ENCODE measurements at regions of chr4 and their contacts with region 1.

Region 1: GRCh38 chr4:150593996-150594395 is 12.0 kb downstream of the MAB21L2 start:
- DNase-seq: peak; percentile 30
- H3K4me3 ChIP-seq: no peak overlapping the region
- H3K27ac ChIP-seq: no peak overlapping the region
- H3K4me1 ChIP-seq: no peaks in the 10 kb centered on the region
- H3K27me3 ChIP-seq: no peaks in the 10 kb centered on the region

Region 2: GRCh38 chr4:149980941-149981340 is 613.1 kb before region 1 on chr4:
- in situ Hi-C with region 1: loop called (anchors 25 kb)
- DNase-seq: peak; percentile 62
- H3K4me3 ChIP-seq: no peak overlapping the region
- H3K27ac ChIP-seq: no peak overlapping the region
- H3K4me1 ChIP-seq: no peaks in the 10 kb centered on the region
- H3K27me3 ChIP-seq: no peaks in the 10 kb centered on the region

Region 3: DNA sequence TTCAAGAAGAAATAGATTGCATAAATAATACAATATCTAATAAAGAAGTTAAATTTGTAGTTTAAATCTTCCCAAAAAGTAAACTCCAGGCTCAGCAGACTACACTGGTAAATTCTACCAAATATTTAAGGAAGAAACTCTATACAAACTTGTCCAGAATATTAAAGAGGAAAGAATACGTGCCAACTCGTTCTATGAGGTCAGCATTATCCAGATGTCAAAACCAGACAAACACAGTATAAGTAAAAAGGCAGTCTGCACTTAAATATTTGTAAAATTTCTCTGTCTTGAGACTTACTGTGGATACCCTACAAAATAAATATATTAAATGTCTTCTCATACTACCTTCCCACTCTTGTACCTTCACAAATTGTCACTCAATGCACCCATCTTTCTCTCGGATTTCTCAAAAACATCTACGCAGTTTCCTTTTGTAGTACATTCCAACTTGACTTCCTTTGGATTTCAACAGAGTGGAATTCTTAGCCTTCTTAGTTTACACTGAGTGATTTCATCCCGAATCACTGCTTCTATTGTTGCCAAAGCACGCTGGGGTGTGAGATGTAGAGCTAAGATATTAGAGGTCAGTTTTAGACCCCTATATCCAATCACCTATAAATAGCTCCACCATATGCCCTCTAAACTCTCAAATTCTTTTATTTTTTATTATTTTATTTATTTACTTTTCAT is 83.7 kb before region 1 on chr4:
- in situ Hi-C with region 1: no loop called
- DNase-seq: peak; percentile 88
- H3K4me3 ChIP-seq: peak overlapping the region; percentile 61
- H3K27ac ChIP-seq: peak overlapping the region; percentile 83
- H3K4me1 ChIP-seq: peaks cover 15% of the 10 kb centered on the region
- H3K27me3 ChIP-seq: no peaks in the 10 kb centered on the region

Region 4: GRCh38 chr4:150722908-150723362 is 128.9 kb after region 1 on chr4:
- in situ Hi-C with region 1: no loop called
- DNase-seq: peak; percentile 8
- H3K4me3 ChIP-seq: no peak overlapping the region
- H3K27ac ChIP-seq: no peak overlapping the region
- H3K4me1 ChIP-seq: no peaks in the 10 kb centered on the region
- H3K27me3 ChIP-seq: no peaks in the 10 kb centered on the region

Region 5: DNA sequence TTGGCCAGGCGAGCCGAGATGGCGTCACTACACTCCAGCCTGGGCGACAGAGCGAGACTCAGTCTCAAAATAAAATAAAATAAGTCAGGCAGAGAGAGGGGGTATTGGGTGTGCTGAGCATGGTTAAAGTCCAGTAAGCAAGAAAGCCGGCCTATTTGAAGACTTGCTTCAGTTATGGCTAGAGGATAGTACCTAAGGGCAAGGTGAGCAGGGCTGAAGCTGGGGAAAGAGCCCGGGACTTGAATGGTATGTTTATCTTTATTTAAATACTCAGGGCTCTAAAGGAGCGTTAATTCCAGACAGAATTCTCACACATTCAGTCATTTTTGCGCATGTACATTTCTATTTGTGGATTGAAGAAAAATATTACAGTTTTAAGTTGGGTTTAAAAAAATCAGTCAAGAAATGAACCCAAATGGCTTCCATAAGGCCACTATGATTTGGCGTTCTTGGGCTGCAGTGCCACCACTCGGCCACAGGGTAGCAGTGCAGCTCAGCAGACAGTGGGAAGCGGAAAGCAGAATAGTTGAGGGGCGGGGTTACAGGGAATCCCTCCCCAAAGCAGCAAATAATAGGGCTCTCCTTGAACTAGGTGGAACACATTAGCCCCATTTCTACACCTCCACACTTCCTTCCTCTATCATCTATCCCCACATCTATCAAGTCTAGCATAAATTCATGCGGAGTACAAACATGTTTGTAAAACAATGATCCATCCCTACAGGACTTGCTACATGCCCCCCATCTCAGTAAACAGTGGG is 768.6 kb after region 1 on chr4:
- in situ Hi-C with region 1: no loop called
- DNase-seq: peak; percentile 90
- H3K4me3 ChIP-seq: no peak overlapping the region
- H3K27ac ChIP-seq: no peak overlapping the region
- H3K4me1 ChIP-seq: no peaks in the 10 kb centered on the region
- H3K27me3 ChIP-seq: no peaks in the 10 kb centered on the region